Activated CD8-positive, alpha-beta T cell treated with anti-CD3 and anti-CD28 coated beads for 36 hours (primary cell): ENCODE measurements at regions of chr10 and their contacts with region 1.

Region 1: GRCh38 chr10:24617771-24618391 is 105.8 kb downstream of the ARHGAP21 start:
- DNase-seq: peak; percentile 57
- ATAC-seq: no peak
- H3K4me3 Mint-ChIP-seq: no peak overlapping the region
- H3K27ac Mint-ChIP-seq: peak overlapping the region; percentile 66
- H3K4me1 Mint-ChIP-seq: peaks cover 25% of the 10 kb centered on the region
- H3K27me3 Mint-ChIP-seq: no peaks in the 10 kb centered on the region
- CTCF ChIP-seq: peak; percentile 96

Region 2: DNA sequence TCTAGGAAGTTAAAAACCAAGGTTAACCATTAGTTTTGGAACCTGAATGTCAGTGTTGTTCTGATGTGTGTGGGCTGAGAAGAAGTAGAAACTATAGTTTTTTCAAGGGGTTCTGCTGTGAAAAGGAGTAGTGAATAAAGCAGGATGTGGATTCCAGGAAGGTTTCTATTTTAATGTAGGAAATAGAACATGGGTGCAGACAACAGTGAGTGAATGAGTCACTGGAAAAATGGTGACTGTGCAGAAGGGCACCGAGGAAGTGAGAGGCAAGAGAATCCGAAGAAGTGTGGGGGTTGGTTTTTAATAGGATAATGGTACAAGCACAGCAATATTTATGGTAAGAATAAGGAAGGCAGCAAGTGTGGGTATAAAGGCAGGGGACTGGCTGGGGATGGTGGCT is 14.5 kb before region 1 on chr10:
- CTCF ChIA-PET with region 1: interaction called, 24 read pairs
- POLR2A ChIA-PET with region 1: no interaction called
- intact Hi-C with region 1: no loop called
- DNase-seq: peak; percentile 33
- ATAC-seq: peak; percentile 92
- H3K4me3 Mint-ChIP-seq: no peak overlapping the region
- H3K27ac Mint-ChIP-seq: peak overlapping the region; percentile 79
- H3K4me1 Mint-ChIP-seq: peaks cover 19% of the 10 kb centered on the region
- H3K27me3 Mint-ChIP-seq: no peaks in the 10 kb centered on the region
- CTCF ChIP-seq: no peak

Region 3: GRCh38 chr10:25080880-25081581 is 463.1 kb after region 1 on chr10:
- CTCF ChIA-PET with region 1: interaction called, 23 read pairs
- POLR2A ChIA-PET with region 1: no interaction called
- intact Hi-C with region 1: no loop called
- DNase-seq: peak; percentile 76
- ATAC-seq: peak; percentile 70
- H3K4me3 Mint-ChIP-seq: no peak overlapping the region
- H3K27ac Mint-ChIP-seq: no peak overlapping the region
- H3K4me1 Mint-ChIP-seq: peaks cover 5% of the 10 kb centered on the region
- H3K27me3 Mint-ChIP-seq: peaks cover 6% of the 10 kb centered on the region
- CTCF ChIP-seq: peak; percentile 88